MCF 10A (cell line): ENCODE measurements at regions of chr21 and their contacts with region 1.

Region 1: DNA sequence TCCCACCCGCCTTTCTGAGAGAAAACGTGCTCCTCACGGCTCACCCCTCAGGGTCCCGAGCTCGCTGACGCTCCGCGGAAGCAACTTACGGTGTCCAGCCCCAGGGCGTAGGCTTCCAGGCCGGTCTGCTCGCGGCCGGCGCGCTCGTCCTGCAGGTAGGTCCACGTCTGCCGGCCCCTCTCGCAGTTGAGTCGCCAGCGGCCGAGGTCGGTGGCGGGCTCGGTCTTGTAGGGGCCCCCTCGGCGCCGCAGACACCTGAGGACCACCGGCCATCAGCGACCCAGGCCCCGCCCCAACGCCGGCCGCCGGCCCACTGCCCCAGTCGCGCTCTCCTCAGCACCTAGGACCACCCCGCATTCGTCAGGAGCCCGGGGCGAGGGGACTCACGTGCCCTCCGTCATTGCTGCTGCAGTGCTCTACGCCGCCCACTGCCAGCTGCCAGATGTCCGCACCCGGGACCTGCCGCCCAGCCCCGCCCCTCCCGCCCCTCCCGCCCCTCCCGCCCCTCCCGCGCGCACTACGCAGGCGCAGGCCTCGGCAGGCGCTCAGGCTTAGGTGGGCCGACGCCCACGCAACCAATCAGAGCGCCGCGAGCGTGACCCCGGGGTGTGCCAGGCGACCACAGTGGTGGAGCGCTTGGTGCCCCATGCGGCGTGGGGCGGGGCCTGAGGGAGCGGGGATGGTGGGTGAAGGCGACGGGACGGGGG is at the start of gene LSS:
- DNase-seq: peak; percentile 98
- H3K4me3 Mint-ChIP-seq: peak within 1 kb of the TSS; percentile 87
- H3K27ac Mint-ChIP-seq: peak within 1 kb of the TSS; percentile 98
- H3K4me1 Mint-ChIP-seq: peaks cover 49% of the 10 kb centered on the region
- H3K27me3 Mint-ChIP-seq: no peaks in the 10 kb centered on the region
- CTCF ChIP-seq: no peak
- total RNA-seq, gene LSS: 45.5 and 47.5 TPM in 2 replicates

Region 2: GRCh38 chr21:46144464-46145070 is 83.9 kb before region 1 on chr21:
- CTCF ChIA-PET with region 1: interaction called, 5 read pairs
- POLR2A ChIA-PET with region 1: interaction called, 10 read pairs
- intact Hi-C with region 1: no loop called
- DNase-seq: no peak
- H3K4me3 Mint-ChIP-seq: no peak overlapping the region
- H3K27ac Mint-ChIP-seq: no peak overlapping the region
- H3K4me1 Mint-ChIP-seq: peaks cover 7% of the 10 kb centered on the region
- H3K27me3 Mint-ChIP-seq: peaks cover 13% of the 10 kb centered on the region
- CTCF ChIP-seq: no peak

Region 3: GRCh38 chr21:46252840-46253239 is 24.3 kb after region 1 on chr21:
- CTCF ChIA-PET with region 1: interaction called, 4 read pairs
- POLR2A ChIA-PET with region 1: interaction called, 7 read pairs
- intact Hi-C with region 1: loop called (anchors 1 kb)
- DNase-seq: no peak
- H3K4me3 Mint-ChIP-seq: no peak overlapping the region
- H3K27ac Mint-ChIP-seq: no peak overlapping the region
- H3K4me1 Mint-ChIP-seq: peaks cover 11% of the 10 kb centered on the region
- H3K27me3 Mint-ChIP-seq: no peaks in the 10 kb centered on the region
- CTCF ChIP-seq: no peak

Region 4: GRCh38 chr21:46285761-46286496 is 57.4 kb after region 1 on chr21 and contains the start of gene YBEY:
- CTCF ChIA-PET with region 1: interaction called, 5 read pairs
- POLR2A ChIA-PET with region 1: interaction called, 19 read pairs
- intact Hi-C with region 1: no loop called
- DNase-seq: peak; percentile 89
- H3K4me3 Mint-ChIP-seq: peak within 1 kb of the TSS; percentile 82
- H3K27ac Mint-ChIP-seq: peak within 1 kb of the TSS; percentile 74
- H3K4me1 Mint-ChIP-seq: peaks cover 15% of the 10 kb centered on the region
- H3K27me3 Mint-ChIP-seq: no peaks in the 10 kb centered on the region
- CTCF ChIP-seq: peak; percentile 20
- total RNA-seq, gene YBEY: 26.7 and 29.9 TPM in 2 replicates